SK-N-SH (cell line): ENCODE measurements at regions of chr16 and their contacts with region 1.

Region 1: DNA sequence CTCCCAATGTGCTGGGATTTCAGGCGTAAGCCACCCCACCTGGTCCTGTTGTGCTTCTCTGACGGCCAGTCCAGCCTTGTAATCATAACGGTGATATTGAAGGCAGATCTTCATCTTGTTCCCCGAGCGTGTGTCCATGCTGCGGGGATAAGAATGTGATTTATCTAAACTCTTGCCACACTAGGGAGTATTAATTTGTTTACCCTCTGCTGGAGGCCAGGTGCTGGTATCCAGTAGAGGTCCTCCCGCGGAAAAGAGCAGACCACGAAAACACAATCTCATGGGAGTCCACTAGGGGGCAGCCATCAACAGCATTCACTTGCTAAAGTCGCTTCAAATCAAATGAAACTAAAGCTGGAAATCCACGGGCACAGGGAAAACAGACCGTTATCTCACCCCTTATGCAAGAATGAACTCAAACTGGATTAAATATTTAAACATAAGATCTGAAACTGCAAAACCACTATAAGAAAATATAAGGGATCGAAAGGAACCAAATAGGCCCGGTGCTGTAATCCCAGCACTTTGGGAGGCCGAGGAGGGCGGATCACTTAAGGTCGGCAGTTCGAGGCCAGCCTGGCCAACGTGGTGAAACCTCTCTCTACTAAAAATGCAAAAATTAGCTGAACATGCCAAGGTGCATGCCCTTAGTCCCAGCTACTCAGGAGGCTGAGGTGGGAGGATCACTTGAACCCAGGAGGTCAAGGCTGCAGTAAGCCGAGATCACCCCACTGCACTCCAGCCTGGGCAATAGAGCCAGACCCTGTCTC is 22.3 kb upstream of the RBBP6 start:
- DNase-seq: peak; percentile 71
- H3K4me3 ChIP-seq: peak overlapping the region in 1 of 2 experiments; percentile 54; a peak in 1 of 4 replicates
- H3K27ac ChIP-seq: no peak overlapping the region
- H3K4me1 ChIP-seq: no peaks in the 10 kb centered on the region
- H3K27me3 ChIP-seq: no peaks in the 10 kb centered on the region
- CTCF ChIP-seq: peak; percentile 92
- EP300 ChIP-seq: no peak
- RAD21 ChIP-seq: peak; percentile 91

Region 2: DNA sequence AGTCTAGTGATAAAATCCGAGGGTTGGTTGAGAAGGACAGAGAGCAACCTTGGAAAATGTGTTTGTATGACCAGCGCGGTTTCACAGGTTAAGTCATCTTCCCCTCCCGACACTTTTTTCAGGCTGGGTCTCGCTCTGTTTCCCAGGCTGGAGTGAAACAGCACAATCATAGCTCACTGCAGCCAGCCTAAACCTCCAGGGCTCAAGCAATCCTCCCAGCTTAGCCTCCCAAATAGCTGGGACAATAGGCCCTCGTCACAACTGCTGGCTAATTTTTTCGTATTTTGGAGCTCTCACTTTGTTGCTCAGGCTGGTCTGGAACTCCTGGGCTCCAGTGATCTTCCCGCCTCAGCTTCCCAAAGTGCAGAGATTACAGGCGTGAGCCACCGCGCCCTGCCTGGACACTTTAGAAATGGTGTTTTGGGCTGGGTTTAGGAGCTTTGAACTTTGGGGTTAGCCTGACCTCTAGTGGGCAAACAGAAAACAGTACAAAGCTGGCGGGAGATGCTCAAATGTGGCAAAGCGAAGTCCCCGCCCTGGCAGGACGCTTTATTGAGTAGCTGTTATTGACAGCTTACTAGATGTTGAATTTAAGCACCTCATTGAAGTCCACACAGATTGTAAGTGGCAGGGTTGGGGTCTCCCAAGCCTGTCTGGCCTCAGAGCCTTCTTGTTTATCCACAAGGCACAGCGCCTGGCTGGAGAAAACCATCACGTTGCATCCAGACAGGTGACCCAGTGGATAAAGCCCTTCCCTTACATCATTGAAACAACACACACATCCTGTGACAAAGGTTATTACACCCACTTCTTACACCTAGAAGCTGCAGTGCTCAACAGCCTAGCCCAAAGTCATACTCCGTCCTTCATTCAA is 12.4 kb before region 1 on chr16:
- CTCF ChIA-PET with region 1: interaction called, 46 read pairs
- POLR2A ChIA-PET with region 1: no interaction called
- DNase-seq: peak; percentile 64
- H3K4me3 ChIP-seq: peak overlapping the region in 1 of 2 experiments; percentile 49; a peak in 1 of 4 replicates
- H3K27ac ChIP-seq: no peak overlapping the region
- H3K4me1 ChIP-seq: peaks cover 0 to 4% of the 10 kb centered on the region in 2 experiments; a peak in 1 of 4 replicates
- H3K27me3 ChIP-seq: no peaks in the 10 kb centered on the region
- CTCF ChIP-seq: peak; percentile 80
- EP300 ChIP-seq: no peak
- RAD21 ChIP-seq: peak; percentile 91

Region 3: GRCh38 chr16:24568392-24568791 is 51.3 kb after region 1 on chr16:
- CTCF ChIA-PET with region 1: interaction called, 10 read pairs
- POLR2A ChIA-PET with region 1: no interaction called
- DNase-seq: peak; percentile 25
- H3K4me3 ChIP-seq: no peak overlapping the region
- H3K27ac ChIP-seq: no peak overlapping the region
- H3K4me1 ChIP-seq: no peaks in the 10 kb centered on the region; a peak in 1 of 4 replicates
- H3K27me3 ChIP-seq: no peaks in the 10 kb centered on the region
- CTCF ChIP-seq: peak; percentile 71
- EP300 ChIP-seq: no peak
- RAD21 ChIP-seq: peak; percentile 64

Region 4: GRCh38 chr16:24689145-24689544 is 172.1 kb after region 1 on chr16:
- CTCF ChIA-PET with region 1: interaction called, 15 read pairs
- POLR2A ChIA-PET with region 1: no interaction called
- DNase-seq: peak; percentile 64
- H3K4me3 ChIP-seq: no peak overlapping the region
- H3K27ac ChIP-seq: no peak overlapping the region
- H3K4me1 ChIP-seq: peaks cover 10 to 20% of the 10 kb centered on the region in 2 experiments
- H3K27me3 ChIP-seq: no peaks in the 10 kb centered on the region
- CTCF ChIP-seq: peak; percentile 67
- EP300 ChIP-seq: no peak
- RAD21 ChIP-seq: peak; percentile 78